Heart left ventricle (tissue), 16 donors: ENCODE measurements at regions of chr20 and their contacts with region 1.

Region 1: GRCh38 chr20:23879811-23880374 is 345 bp upstream of the CST5 start:
- DNase-seq: no peak
- ATAC-seq: no peak
- H3K4me3 ChIP-seq: no peak overlapping the region
- H3K27ac ChIP-seq: no peak overlapping the region
- H3K4me1 ChIP-seq: no peaks in the 10 kb centered on the region
- H3K27me3 ChIP-seq: peaks cover 0 to 4% (median 0%) of the 10 kb centered on the region in 9 donors
- CTCF ChIP-seq: no peak
- POLR2A ChIP-seq: no peak

Region 2: DNA sequence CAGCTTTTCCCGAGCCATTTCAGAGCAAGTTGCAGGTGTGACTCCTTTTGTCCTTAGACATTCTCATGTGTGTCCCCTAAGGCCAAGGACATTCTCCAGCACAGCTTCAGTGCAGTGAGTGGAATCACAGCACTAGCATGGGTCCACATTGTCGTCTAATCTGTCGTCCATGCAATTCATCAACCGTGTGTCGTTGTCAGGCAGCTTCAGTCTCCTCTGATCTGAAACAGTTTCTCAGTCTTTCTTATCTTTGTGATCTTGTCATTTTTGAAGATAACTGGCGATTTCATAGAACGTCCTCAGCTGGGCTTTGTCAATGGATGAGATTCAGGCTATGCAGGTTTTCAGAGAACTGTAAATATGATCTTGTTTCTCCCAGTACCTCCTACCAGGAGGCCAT is 85.1 kb before region 1 on chr20:
- intact Hi-C with region 1: loop called in 1 of 10 experiments (anchors 5 kb)
- DNase-seq: no peak
- ATAC-seq: no peak
- H3K4me3 ChIP-seq: no peak overlapping the region
- H3K27ac ChIP-seq: no peak overlapping the region
- H3K4me1 ChIP-seq: no peaks in the 10 kb centered on the region
- H3K27me3 ChIP-seq: peaks cover 0 to 11% (median 0%) of the 10 kb centered on the region in 9 donors
- CTCF ChIP-seq: no peak
- POLR2A ChIP-seq: no peak